HepG2 (cell line): ENCODE measurements at regions of chr17 and their contacts with region 1.

Region 1: DNA sequence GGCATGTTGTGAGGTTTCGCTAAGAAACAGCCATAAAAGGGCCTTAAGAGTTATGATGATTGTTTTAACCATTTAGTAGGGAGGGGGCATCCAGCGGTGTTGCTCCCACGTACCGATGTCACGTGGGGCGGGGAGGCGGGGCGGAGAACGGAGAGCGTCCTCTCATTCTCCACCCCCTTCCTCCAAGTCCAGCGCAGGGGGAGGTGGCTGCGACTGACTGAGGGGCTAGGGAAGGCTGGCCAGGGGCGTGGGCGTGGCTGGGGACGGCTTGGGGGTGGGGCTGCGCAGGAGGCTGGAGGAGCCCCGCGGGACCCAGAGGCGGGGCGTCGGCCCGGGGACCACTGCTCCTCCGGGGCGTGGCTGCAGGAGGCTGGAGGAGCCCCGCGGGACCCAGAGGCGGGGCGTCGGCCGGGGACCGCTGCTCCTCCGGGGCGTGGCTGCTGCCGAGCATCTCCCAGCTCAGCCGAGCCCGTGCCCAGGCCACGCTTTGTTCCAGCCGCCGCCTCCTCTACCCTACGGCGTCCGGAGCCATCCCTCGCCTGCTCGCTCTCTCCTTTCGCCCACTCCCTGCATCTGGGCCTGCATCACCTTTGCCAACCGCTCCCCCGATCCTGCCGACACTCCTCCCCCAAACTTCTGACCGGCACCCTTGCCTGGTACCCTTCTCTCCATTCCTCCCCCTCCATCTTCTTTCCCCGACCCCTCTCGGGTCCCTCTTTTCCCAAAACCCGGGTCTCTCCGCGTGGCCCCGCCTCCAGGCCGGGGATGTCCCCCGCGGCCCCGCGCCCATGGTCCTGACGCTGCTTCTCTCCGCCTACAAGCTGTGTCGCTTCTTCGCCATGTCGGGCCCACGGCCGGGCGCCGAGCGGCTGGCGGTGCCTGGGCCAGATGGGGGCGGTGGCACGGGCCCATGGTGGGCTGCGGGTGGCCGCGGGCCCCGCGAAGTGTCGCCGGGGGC is at the start of gene SARM1:
- DNase-seq: peak; percentile 75
- ATAC-seq: peak; percentile 42
- H3K4me3 ChIP-seq: peak within 1 kb of the TSS; percentile 23 to 77 (median 30); a peak in 5 of 6 replicates
- H3K27ac ChIP-seq: peak within 1 kb of the TSS; percentile 92
- H3K4me1 ChIP-seq: peaks cover 47% of the 10 kb centered on the region
- H3K27me3 ChIP-seq: no peaks in the 10 kb centered on the region
- CTCF ChIP-seq: no peak
- EP300 ChIP-seq: no peak; a peak in 1 of 4 replicates
- POLR2A ChIP-seq: peak in 1 of 2 experiments; percentile 49; a peak in 2 of 4 replicates
- RAD21 ChIP-seq: no peak
- total RNA-seq, gene SARM1: 0.25 and 0.73 TPM in 2 replicates

Region 2: DNA sequence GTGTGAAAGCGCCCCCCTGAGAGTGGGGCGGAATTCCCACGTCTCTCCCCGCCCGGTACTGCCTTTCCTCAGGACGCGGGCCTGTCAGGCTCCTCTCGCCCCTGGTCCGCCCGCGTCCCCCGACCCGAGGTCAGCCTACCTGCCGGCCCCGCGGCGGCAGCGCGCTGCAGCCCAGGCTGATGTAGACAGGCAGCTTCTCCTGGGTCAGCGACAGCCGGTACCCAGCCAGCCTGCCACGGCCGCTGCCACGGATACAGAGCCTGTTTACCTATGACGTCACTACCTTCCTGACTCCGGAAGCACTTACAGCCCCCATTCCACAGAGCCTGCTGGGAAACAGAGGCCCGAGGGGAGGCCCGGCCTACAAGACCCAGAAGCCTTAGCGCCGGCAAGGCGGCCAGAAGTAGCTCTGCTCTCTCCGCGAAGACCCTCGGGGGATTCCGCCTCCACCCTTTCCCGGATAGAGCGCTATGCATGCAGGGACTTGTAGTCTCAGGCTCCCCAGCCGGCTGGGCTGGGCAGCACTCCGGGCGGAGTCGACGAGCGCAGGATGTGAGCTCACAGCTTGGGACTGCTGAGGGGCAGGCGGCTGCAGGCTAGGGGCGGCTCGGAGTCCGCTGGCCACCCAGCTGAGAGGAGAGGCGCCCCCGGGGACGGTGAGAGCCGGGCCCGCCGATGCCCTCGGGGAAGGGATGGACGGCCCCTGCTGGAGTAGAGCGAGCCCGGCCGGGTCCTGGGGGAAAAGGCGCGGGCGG is 36.1 kb before region 1 on chr17 and contains the starts of genes IFT20 and TNFAIP1:
- CTCF ChIA-PET with region 1: no interaction called
- POLR2A ChIA-PET with region 1: interaction called, 63 read pairs
- in situ Hi-C with region 1: no loop called
- intact Hi-C with region 1: loop called (anchors 1 kb)
- DNase-seq: peak; percentile 99
- ATAC-seq: peak; percentile 97
- H3K4me3 ChIP-seq: peak within 1 kb of the TSS; percentile 92 to 94 (median 93)
- H3K27ac ChIP-seq: peak within 1 kb of the TSS; percentile 72
- H3K4me1 ChIP-seq: peaks cover 46% of the 10 kb centered on the region
- H3K27me3 ChIP-seq: no peaks in the 10 kb centered on the region; a peak in 1 of 5 replicates
- CTCF ChIP-seq: peak; percentile 49
- EP300 ChIP-seq: 0 out of 4 replicates have a peak, but pooled peaks of 1 of the 2 experiments have one; percentile 34
- POLR2A ChIP-seq: peak; percentile 42 to 87; a peak in 3 of 4 replicates
- RAD21 ChIP-seq: peak; percentile 26; the same call in 1 of the 2 replicates
- total RNA-seq, gene IFT20: 23.4 and 28.0 TPM in 2 replicates
- total RNA-seq, gene TNFAIP1: 17.5 and 18.7 TPM in 2 replicates

Region 3: DNA sequence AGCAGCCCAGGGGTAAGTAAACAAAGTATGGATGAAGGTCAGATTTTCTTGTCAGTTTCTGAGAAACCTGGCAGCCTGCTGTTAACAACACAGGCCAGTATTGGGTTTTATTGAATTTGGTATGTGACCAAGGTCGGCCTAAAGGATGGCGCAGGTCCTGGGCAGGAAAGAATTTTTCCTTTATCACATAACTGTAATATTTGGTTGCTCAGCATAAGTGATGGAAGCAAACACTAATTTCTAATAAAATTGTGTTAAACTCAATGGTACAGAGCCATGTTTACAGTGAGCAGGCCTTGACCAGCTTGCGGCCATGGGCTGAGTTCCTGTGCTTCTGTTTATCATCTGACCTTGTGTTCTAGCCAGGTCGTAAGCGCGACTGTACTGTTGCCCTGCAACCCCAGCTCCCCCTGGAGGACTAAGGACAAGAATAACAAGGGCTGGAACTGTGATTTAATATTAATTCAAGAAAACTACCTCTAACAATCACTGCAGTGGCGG is 24.7 kb before region 1 on chr17:
- CTCF ChIA-PET with region 1: no interaction called
- POLR2A ChIA-PET with region 1: interaction called, 30 read pairs
- in situ Hi-C with region 1: no loop called
- intact Hi-C with region 1: no loop called
- DNase-seq: peak; percentile 69
- ATAC-seq: peak; percentile 86
- H3K4me3 ChIP-seq: no peak overlapping the region
- H3K27ac ChIP-seq: peak overlapping the region; percentile 43
- H3K4me1 ChIP-seq: peaks cover 26% of the 10 kb centered on the region
- H3K27me3 ChIP-seq: no peaks in the 10 kb centered on the region
- CTCF ChIP-seq: peak; percentile 84
- EP300 ChIP-seq: peak in 1 of 2 experiments; percentile 37; a peak in 2 of 4 replicates
- POLR2A ChIP-seq: no peak
- RAD21 ChIP-seq: peak; percentile 62; the same call in 1 of the 2 replicates

Region 4: DNA sequence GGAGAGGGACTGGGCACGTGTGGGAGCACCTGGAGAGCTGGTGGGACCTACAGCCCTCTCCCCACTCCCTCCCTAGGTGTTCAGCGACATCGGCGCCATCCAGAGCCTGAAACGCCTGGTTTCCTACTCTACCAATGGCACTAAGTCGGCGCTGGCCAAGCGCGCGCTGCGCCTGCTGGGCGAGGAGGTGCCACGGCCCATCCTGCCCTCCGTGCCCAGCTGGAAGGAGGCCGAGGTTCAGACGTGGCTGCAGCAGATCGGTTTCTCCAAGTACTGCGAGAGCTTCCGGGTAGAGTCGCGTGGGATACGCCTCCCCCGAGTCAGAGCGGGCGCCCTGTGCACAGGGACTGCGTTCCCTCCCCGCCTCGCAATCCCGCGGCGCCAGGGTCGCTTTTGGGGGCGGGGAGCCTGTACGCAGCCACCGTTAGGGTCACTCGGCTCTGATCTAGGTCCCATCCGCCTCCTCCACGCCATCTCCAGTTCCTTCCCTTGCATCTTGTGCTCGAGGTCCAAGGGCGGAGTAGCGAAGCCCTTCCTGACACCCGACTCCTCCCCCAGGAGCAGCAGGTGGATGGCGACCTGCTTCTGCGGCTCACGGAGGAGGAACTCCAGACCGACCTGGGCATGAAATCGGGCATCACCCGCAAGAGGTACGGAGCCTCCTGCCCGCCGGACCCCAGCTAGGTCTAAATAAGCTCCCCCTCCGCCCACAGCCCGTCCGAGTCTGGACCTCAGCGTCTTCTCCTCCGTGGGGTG is 12.9 kb after region 1 on chr17:
- CTCF ChIA-PET with region 1: no interaction called
- POLR2A ChIA-PET with region 1: interaction called, 107 read pairs
- in situ Hi-C with region 1: no loop called
- intact Hi-C with region 1: no loop called
- DNase-seq: no peak
- ATAC-seq: no peak
- H3K4me3 ChIP-seq: no peak overlapping the region
- H3K27ac ChIP-seq: no peak overlapping the region
- H3K4me1 ChIP-seq: peaks cover 26% of the 10 kb centered on the region
- H3K27me3 ChIP-seq: no peaks in the 10 kb centered on the region
- CTCF ChIP-seq: no peak
- EP300 ChIP-seq: no peak
- POLR2A ChIP-seq: no peak
- RAD21 ChIP-seq: no peak

Region 5: DNA sequence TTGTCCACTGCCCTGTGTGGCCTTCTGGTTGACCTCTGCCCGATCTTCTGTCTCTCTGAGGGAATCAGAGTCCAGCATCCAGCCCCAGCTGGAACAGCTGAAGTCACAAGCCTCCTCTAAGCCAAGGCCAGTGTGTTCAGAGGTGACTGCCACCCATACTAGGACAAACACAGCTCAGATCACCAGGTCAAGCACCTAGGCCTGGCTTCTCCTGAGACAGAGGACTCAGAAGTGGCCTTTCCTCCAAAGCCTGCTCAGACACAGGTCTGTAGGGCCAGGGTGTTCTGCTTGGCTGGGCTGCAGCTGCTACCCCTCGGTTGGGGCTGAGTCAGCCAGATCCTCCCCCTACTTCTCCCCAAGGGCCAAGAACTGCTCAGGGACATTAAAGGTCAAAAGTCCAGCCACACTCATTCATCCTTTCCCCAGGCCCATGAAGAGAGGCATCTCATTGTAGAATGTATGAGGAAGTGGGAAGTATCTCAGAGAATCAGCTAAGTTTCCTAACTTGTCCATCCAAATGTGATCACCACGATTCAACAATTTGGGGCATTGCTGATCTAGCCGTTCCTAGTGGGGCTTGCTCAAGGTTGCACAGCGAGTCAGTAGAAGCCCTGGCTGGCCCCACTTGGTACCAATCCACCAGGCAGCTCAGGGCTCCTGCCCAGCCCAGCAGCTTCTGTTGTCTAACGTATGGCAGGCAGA is 26.9 kb after region 1 on chr17:
- CTCF ChIA-PET with region 1: no interaction called
- POLR2A ChIA-PET with region 1: interaction called, 33 read pairs
- in situ Hi-C with region 1: no loop called
- intact Hi-C with region 1: no loop called
- DNase-seq: peak; percentile 8
- ATAC-seq: peak; percentile 73
- H3K4me3 ChIP-seq: no peak overlapping the region
- H3K27ac ChIP-seq: peak overlapping the region; percentile 31
- H3K4me1 ChIP-seq: peaks cover 40% of the 10 kb centered on the region
- H3K27me3 ChIP-seq: no peaks in the 10 kb centered on the region
- CTCF ChIP-seq: no peak
- EP300 ChIP-seq: no peak
- POLR2A ChIP-seq: no peak
- RAD21 ChIP-seq: no peak

Region 6: GRCh38 chr17:28405632-28406472 is 34.3 kb after region 1 on chr17 and contains the start of gene SLC46A1:
- CTCF ChIA-PET with region 1: no interaction called
- POLR2A ChIA-PET with region 1: interaction called, 122 read pairs
- in situ Hi-C with region 1: no loop called
- intact Hi-C with region 1: no loop called
- DNase-seq: peak; percentile 28
- ATAC-seq: peak; percentile 75
- H3K4me3 ChIP-seq: peak within 1 kb of the TSS; percentile 68 to 84 (median 76)
- H3K27ac ChIP-seq: peak within 1 kb of the TSS; percentile 67
- H3K4me1 ChIP-seq: peaks cover 27% of the 10 kb centered on the region
- H3K27me3 ChIP-seq: no peaks in the 10 kb centered on the region; a peak in 1 of 5 replicates
- CTCF ChIP-seq: no peak
- EP300 ChIP-seq: no peak
- POLR2A ChIP-seq: peak in 1 of 2 experiments; percentile 75; a peak in 2 of 4 replicates
- RAD21 ChIP-seq: no peak
- total RNA-seq, gene SLC46A1: 9.4 and 22.6 TPM in 2 replicates

Region 7: GRCh38 chr17:28416703-28417311 is 45.3 kb after region 1 on chr17:
- CTCF ChIA-PET with region 1: no interaction called
- POLR2A ChIA-PET with region 1: interaction called, 18 read pairs
- in situ Hi-C with region 1: no loop called
- intact Hi-C with region 1: loop called (anchors 2 kb)
- DNase-seq: peak; percentile 87
- ATAC-seq: peak; percentile 99
- H3K4me3 ChIP-seq: no peak overlapping the region; a peak in 1 of 6 replicates
- H3K27ac ChIP-seq: no peak overlapping the region
- H3K4me1 ChIP-seq: peaks cover 22% of the 10 kb centered on the region
- H3K27me3 ChIP-seq: 0 out of 5 replicates have a peak, but pooled peaks cover 0 to 7% of the 10 kb centered on the region in 2 experiments
- CTCF ChIP-seq: peak; percentile 96
- EP300 ChIP-seq: no peak
- POLR2A ChIP-seq: no peak
- RAD21 ChIP-seq: peak; percentile 83